Pancreas (tissue), 10 donors: ENCODE measurements at regions of chrX and their contacts with region 1.

Region 1: GRCh38 chrX:119004920-119005524 is 30.6 kb downstream of the LONRF3 start:
- DNase-seq: peak in 5 of 6 donors; percentile 7 to 87 (median 64)
- ATAC-seq: peak; percentile 80 to 94 (median 90)
- H3K4me3 ChIP-seq: no peak overlapping the region
- H3K27ac ChIP-seq: no peak overlapping the region
- H3K4me1 ChIP-seq: no peaks in the 10 kb centered on the region
- H3K27me3 ChIP-seq: peaks cover 0 to 3% (median 0%) of the 10 kb centered on the region in 4 donors
- CTCF ChIP-seq: peak; percentile 85 to 96 (median 93)

Region 2: GRCh38 chrX:118853596-118853995 is 151.4 kb before region 1 on chrX:
- intact Hi-C with region 1: loop called in 2 of 3 experiments (anchors 10 kb)
- DNase-seq: no peak
- ATAC-seq: peak in 1 of 4 donors; percentile 48
- H3K4me3 ChIP-seq: no peak overlapping the region
- H3K27ac ChIP-seq: no peak overlapping the region
- H3K4me1 ChIP-seq: no peaks in the 10 kb centered on the region
- H3K27me3 ChIP-seq: no peaks in the 10 kb centered on the region
- CTCF ChIP-seq: no peak

Region 3: DNA sequence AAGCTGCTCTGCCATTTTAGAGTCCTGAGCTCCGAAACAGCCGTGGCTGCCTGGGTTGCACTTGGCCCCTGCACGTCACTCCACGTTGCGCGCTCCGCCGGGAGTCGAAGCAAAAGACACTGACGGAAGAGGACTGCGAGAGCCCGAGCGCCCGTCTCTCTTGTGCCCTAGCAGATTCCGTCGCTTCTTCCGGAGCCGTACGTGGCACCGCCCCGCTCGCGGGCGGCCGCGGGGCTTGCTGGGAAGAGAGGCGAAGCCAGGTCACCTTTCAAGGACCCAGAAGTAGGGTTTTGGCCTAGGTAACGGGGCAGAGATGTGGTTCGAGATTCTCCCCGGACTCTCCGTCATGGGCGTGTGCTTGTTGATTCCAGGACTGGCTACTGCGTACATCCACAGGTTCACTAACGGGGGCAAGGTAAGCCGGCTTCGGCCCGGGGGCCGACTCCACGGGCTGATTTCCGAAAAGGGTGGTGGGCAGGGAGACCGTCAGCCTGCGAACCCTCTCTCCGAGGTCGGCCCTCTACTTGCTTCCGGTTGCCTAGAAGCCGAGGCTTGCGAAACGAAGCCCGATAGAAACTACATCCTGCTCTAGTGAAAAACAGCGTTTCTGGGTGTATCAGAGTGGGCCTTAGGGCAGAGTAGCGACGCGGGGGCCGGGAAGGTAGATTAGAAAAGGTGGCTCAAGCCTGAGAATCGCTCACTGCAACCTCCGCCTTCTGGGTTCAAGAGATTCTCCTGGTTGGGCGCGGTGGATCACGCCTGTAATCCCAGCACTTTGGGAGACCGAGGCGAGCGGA is 866.8 kb after region 1 on chrX and contains the starts of genes NDUFA1 and RNF113A:
- intact Hi-C with region 1: no loop called
- DNase-seq: peak; percentile 84 to 92 (median 86)
- ATAC-seq: peak; percentile 96 to 98 (median 97)
- H3K4me3 ChIP-seq: peak within 1 kb of the TSS; percentile 29 to 49 (median 43)
- H3K27ac ChIP-seq: peak within 1 kb of the TSS; percentile 70 to 88 (median 82)
- H3K4me1 ChIP-seq: no peaks in the 10 kb centered on the region
- H3K27me3 ChIP-seq: no peaks in the 10 kb centered on the region
- CTCF ChIP-seq: no peak
- total RNA-seq, gene NDUFA1: 28.8 to 47.2 (median 39.8) TPM
- total RNA-seq, gene RNF113A: 8.1 to 14.5 (median 9.3) TPM